PC-9 (cell line): ENCODE measurements at regions of chr1 and their contacts with region 1.

Region 1: DNA sequence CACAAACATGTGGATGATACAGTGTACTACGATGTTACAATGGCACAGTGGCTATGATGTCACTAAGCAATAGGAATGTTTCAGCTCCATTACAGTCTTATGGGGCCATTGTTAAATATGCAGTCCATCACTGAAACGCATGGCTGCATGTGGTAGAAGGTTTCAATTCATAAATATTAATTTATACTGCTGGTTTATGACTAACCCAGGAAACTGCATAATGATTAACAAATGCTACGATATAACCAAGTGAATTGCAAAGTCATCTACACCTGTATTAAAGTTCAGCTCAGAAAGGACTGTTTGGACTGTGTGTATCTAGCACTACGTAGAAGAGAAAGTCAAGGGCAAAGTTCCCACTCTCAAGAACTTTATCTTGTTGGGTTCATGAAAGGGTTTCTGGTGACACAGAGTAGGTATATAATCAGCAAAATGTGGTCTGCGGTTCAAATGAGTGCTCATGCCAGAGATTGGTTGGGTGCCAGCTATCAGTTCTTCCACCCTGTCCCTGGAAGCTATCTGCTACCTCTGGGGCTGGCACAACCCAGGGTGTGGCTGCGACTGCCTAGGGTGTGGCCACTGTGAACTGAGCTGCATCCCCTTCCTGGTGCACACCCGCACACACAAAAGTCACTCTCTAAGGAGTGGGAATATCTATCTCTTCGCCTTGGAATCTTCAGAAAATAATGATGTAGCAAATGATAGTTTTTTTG is 14.8 kb downstream of the MGST3 start:
- DNase-seq: peak in 1 of 2 experiments; percentile 50
- H3K4me3 ChIP-seq: no peak overlapping the region
- H3K27ac ChIP-seq: no peak overlapping the region
- H3K4me1 ChIP-seq: peaks cover 20% of the 10 kb centered on the region
- H3K27me3 ChIP-seq: no peaks in the 10 kb centered on the region
- CTCF ChIP-seq: no peak

Region 2: DNA sequence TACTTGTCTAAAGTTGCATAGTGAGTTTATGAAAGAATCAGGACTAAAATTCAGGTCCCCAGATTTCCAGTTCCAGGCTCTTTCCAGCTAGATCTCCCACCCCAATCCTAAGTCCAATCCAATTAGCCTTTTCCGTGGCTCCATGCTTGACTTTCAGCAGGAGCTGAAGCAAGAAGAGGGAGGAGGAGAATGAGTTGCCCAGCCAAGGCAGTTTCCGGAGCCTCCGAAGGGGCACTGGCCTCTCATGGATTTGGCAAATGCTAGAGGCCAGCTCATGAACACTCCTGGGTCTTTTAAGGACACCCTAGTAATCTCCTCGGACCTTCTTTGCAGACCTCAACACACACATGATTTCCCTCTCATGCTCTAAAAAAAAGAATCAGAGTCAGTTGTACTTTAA is 112.6 kb before region 1 on chr1:
- CTCF ChIA-PET with region 1: no interaction called
- POLR2A ChIA-PET with region 1: interaction called, 11 read pairs
- intact Hi-C with region 1: no loop called
- DNase-seq: no peak
- H3K4me3 ChIP-seq: no peak overlapping the region
- H3K27ac ChIP-seq: no peak overlapping the region
- H3K4me1 ChIP-seq: no peaks in the 10 kb centered on the region
- H3K27me3 ChIP-seq: no peaks in the 10 kb centered on the region
- CTCF ChIP-seq: no peak

Region 3: DNA sequence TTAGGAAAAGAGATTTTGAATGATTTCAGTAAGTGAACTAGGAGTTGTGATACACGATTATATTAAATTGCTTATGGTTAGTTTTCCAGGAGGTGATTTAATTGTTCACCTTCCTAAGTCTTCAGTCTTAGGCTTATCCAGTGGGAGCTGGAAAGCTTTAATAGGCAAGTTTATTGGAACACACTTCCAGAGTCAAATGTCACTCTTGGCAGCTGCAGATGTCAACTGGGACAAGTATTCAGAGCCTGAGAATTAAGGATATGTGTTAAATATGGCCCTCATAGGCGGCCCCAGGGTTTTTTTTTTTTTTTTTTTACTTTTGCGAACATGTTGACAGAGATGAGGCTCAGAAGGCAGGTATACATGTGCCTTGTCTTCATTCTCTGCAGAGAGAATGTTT is 210.8 kb after region 1 on chr1:
- CTCF ChIA-PET with region 1: no interaction called
- POLR2A ChIA-PET with region 1: interaction called, 19 read pairs
- intact Hi-C with region 1: no loop called
- DNase-seq: no peak
- H3K4me3 ChIP-seq: no peak overlapping the region
- H3K27ac ChIP-seq: no peak overlapping the region
- H3K4me1 ChIP-seq: peaks cover 20% of the 10 kb centered on the region
- H3K27me3 ChIP-seq: no peaks in the 10 kb centered on the region
- CTCF ChIP-seq: no peak